ENCODE measurements at regions of chr15 and their contacts with region 1.

Region 1: GRCh38 chr15:95713324-95713723 is 617.2 kb upstream of the NR2F2 start:
- DNase-seq: no peak
- ATAC-seq: no peak
- H3K4me3 ChIP-seq: no peak overlapping the region
- H3K27ac ChIP-seq: no peak overlapping the region
- H3K4me1 ChIP-seq: no peaks in the 10 kb centered on the region
- H3K27me3 ChIP-seq: no peaks in the 10 kb centered on the region
- CTCF ChIP-seq: no peak

Region 2: DNA sequence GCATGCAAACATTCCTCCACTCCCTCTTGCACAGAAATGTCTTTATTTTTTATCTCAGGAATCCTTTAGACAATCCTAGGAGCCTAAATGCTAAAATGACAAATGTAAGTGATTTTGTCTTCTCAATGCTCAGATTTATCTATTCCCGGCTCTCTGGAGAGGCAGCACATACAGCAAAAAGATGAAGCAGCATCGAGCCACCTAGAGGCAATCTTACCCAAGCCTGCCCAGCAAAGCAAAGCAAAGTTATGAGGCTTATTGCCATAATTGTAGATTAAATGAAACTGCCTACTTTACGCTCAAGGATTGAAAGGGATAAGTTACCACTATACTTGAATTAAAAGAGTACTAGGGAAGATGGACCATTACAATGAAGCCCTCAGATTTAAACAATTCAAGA is 133.2 kb before region 1 on chr15:
- CTCF ChIA-PET with region 1: no interaction called
- POLR2A ChIA-PET with region 1: no interaction called
- in situ Hi-C with region 1: no loop called
- intact Hi-C with region 1: no loop called
- DNase-seq: no peak
- ATAC-seq: no peak
- H3K4me3 ChIP-seq: no peak overlapping the region
- H3K27ac ChIP-seq: no peak overlapping the region
- H3K4me1 ChIP-seq: no peaks in the 10 kb centered on the region
- H3K27me3 ChIP-seq: no peaks in the 10 kb centered on the region
- CTCF ChIP-seq: peak; percentile 23

Region 3: GRCh38 chr15:95604634-95605036 is 108.7 kb before region 1 on chr15:
- CTCF ChIA-PET with region 1: no interaction called
- POLR2A ChIA-PET with region 1: no interaction called
- in situ Hi-C with region 1: no loop called
- intact Hi-C with region 1: no loop called
- DNase-seq: no peak
- ATAC-seq: no peak
- H3K4me3 ChIP-seq: no peak overlapping the region
- H3K27ac ChIP-seq: no peak overlapping the region
- H3K4me1 ChIP-seq: no peaks in the 10 kb centered on the region
- H3K27me3 ChIP-seq: no peaks in the 10 kb centered on the region
- CTCF ChIP-seq: no peak

Region 4: GRCh38 chr15:95653361-95653805 is 59.9 kb before region 1 on chr15:
- CTCF ChIA-PET with region 1: no interaction called
- POLR2A ChIA-PET with region 1: interaction called, 11 read pairs
- in situ Hi-C with region 1: no loop called
- intact Hi-C with region 1: no loop called
- DNase-seq: no peak
- ATAC-seq: no peak
- H3K4me3 ChIP-seq: no peak overlapping the region
- H3K27ac ChIP-seq: no peak overlapping the region
- H3K4me1 ChIP-seq: no peaks in the 10 kb centered on the region
- H3K27me3 ChIP-seq: no peaks in the 10 kb centered on the region
- CTCF ChIP-seq: no peak

Measured in Panc1 (cell line).